Dendritic cell treated with granulocyte-macrophage colony-stimulating factor and Interleukin-4, amounts not matched to agents 40 ng/mL and 50 ng/mL, for 4 days (primary cell): ENCODE measurements at regions of chr9 and their contacts with region 1.

Region 1: GRCh38 chr9:34458013-34458958 is at the starts of genes DNAI1 and FAM219A:
- H3K4me3 Mint-ChIP-seq: peak within 1 kb of the TSS; percentile 82
- H3K27ac Mint-ChIP-seq: peak within 1 kb of the TSS; percentile 75
- H3K4me1 Mint-ChIP-seq: peaks cover 51% of the 10 kb centered on the region
- H3K27me3 Mint-ChIP-seq: peaks cover 35% of the 10 kb centered on the region

Region 2: DNA sequence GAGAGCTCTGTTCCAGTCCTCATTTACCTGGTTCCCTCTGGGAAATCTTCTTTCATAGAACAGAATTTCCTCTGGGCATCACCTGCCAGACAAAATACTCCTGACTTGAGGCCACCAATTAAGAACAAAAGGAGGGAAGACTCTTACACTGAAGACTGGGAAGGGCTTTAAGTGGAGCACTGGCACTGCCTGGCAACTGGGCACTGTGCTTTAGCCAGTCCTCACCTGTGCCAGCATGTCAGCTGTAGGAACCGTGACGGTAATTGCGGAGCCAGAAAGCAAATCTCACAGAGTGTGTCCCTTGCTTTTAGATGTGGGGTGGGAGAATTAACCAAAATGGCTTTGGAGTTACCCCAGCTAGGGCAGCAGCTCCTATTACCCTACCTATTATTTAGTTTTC is 40.6 kb before region 1 on chr9:
- intact Hi-C with region 1: no loop called
- H3K4me3 Mint-ChIP-seq: no peak overlapping the region
- H3K27ac Mint-ChIP-seq: no peak overlapping the region
- H3K4me1 Mint-ChIP-seq: no peaks in the 10 kb centered on the region
- H3K27me3 Mint-ChIP-seq: peaks cover 2% of the 10 kb centered on the region

Region 3: GRCh38 chr9:34519321-34520020 is 61.2 kb after region 1 on chr9:
- intact Hi-C with region 1: loop called (anchors 1 kb)
- H3K4me3 Mint-ChIP-seq: peak overlapping the region; percentile 1
- H3K27ac Mint-ChIP-seq: peak overlapping the region; percentile 75
- H3K4me1 Mint-ChIP-seq: peaks cover 73% of the 10 kb centered on the region
- H3K27me3 Mint-ChIP-seq: peaks cover 36% of the 10 kb centered on the region

Region 4: GRCh38 chr9:34611829-34612630 is 153.7 kb after region 1 on chr9 and contains the start of gene RPP25L:
- intact Hi-C with region 1: loop called (anchors 1 kb)
- H3K4me3 Mint-ChIP-seq: peak within 1 kb of the TSS; percentile 86
- H3K27ac Mint-ChIP-seq: peak within 1 kb of the TSS; percentile 94
- H3K4me1 Mint-ChIP-seq: peaks cover 33% of the 10 kb centered on the region
- H3K27me3 Mint-ChIP-seq: no peaks in the 10 kb centered on the region